Psoas muscle (tissue), 8 donors: ENCODE measurements at regions of chr7 and their contacts with region 1.

Region 1: GRCh38 chr7:140901941-140902302 is 22.8 kb downstream of the BRAF start:
- DNase-seq: no peak
- ATAC-seq: no peak
- H3K4me3 ChIP-seq: no peak overlapping the region
- H3K27ac ChIP-seq: no peak overlapping the region
- H3K4me1 ChIP-seq: peaks cover 7% of the 10 kb centered on the region
- H3K27me3 ChIP-seq: no peaks in the 10 kb centered on the region
- CTCF ChIP-seq: no peak

Region 2: GRCh38 chr7:140876519-140877248 is 25.2 kb before region 1 on chr7:
- intact Hi-C with region 1: loop called in 1 of 2 experiments (anchors 1 kb)
- DNase-seq: no peak
- ATAC-seq: no peak
- H3K4me3 ChIP-seq: no peak overlapping the region
- H3K27ac ChIP-seq: no peak overlapping the region
- H3K4me1 ChIP-seq: peaks cover 13% of the 10 kb centered on the region
- H3K27me3 ChIP-seq: no peaks in the 10 kb centered on the region
- CTCF ChIP-seq: no peak

Region 3: GRCh38 chr7:141003172-141004065 is 101.5 kb after region 1 on chr7:
- intact Hi-C with region 1: no loop called
- DNase-seq: no peak
- ATAC-seq: no peak
- H3K4me3 ChIP-seq: no peak overlapping the region
- H3K27ac ChIP-seq: no peak overlapping the region
- H3K4me1 ChIP-seq: no peaks in the 10 kb centered on the region
- H3K27me3 ChIP-seq: no peaks in the 10 kb centered on the region
- CTCF ChIP-seq: no peak

Region 4: GRCh38 chr7:141320287-141320686 is 418.4 kb after region 1 on chr7:
- intact Hi-C with region 1: no loop called
- DNase-seq: no peak
- ATAC-seq: no peak
- H3K4me3 ChIP-seq: no peak overlapping the region
- H3K27ac ChIP-seq: no peak overlapping the region
- H3K4me1 ChIP-seq: no peaks in the 10 kb centered on the region
- H3K27me3 ChIP-seq: no peaks in the 10 kb centered on the region
- CTCF ChIP-seq: no peak